Right lobe of liver (tissue), 6 donors: ENCODE measurements at regions of chr22 and their contacts with region 1.

Region 1: GRCh38 chr22:19970479-19971275 is 29.1 kb upstream of the TXNRD2 start:
- DNase-seq: peak; percentile 84 to 91 (median 91)
- ATAC-seq: peak; percentile 71 to 80 (median 76)
- H3K4me3 ChIP-seq: peak overlapping the region in 1 of 3 donors; percentile 16
- H3K27ac ChIP-seq: peak overlapping the region; percentile 85 to 96 (median 94)
- H3K4me1 ChIP-seq: peaks cover 0 to 45% (median 21%) of the 10 kb centered on the region in 4 donors
- H3K27me3 ChIP-seq: no peaks in the 10 kb centered on the region
- CTCF ChIP-seq: peak; percentile 87 to 97 (median 94)
- POLR2A ChIP-seq: peak; percentile 54

Region 2: GRCh38 chr22:20016734-20017621 is 46.3 kb after region 1 on chr22 and contains the start of gene ARVCF:
- intact Hi-C with region 1: loop called (anchors 5 to 10 kb)
- DNase-seq: peak; percentile 94 to 96 (median 95)
- ATAC-seq: peak; percentile 69 to 80 (median 78)
- H3K4me3 ChIP-seq: peak within 1 kb of the TSS; percentile 73 to 85 (median 80)
- H3K27ac ChIP-seq: peak within 1 kb of the TSS in 1 of 3 donors; percentile 43
- H3K4me1 ChIP-seq: peaks cover 0 to 32% (median 2%) of the 10 kb centered on the region in 4 donors
- H3K27me3 ChIP-seq: no peaks in the 10 kb centered on the region
- CTCF ChIP-seq: peak; percentile 10 to 30 (median 14)
- POLR2A ChIP-seq: no peak
- total RNA-seq, gene ARVCF: 11.5 to 40.9 (median 20.7) TPM

Region 3: GRCh38 chr22:20116951-20117645 is 146.4 kb after region 1 on chr22 and contains the start of gene TRMT2A:
- intact Hi-C with region 1: loop called (anchors 10 kb)
- DNase-seq: peak; percentile 97 to 98 (median 97)
- ATAC-seq: peak; percentile 86 to 91 (median 87)
- H3K4me3 ChIP-seq: peak within 1 kb of the TSS; percentile 73 to 92 (median 81)
- H3K27ac ChIP-seq: peak within 1 kb of the TSS; percentile 71 to 85 (median 81)
- H3K4me1 ChIP-seq: peaks cover 0 to 24% (median 11%) of the 10 kb centered on the region in 4 donors
- H3K27me3 ChIP-seq: no peaks in the 10 kb centered on the region
- CTCF ChIP-seq: peak in 1 of 4 donors; percentile 18
- POLR2A ChIP-seq: peak; percentile 77
- total RNA-seq, gene TRMT2A: 26.9 to 54.6 (median 29.1) TPM